ENCODE measurements at regions of chr14 and their contacts with region 1.

Region 1: GRCh38 chr14:64294672-64295413 is 672 bp upstream of the ESR2 start:
- DNase-seq: peak; percentile 91
- ATAC-seq: peak; percentile 87
- H3K4me3 Mint-ChIP-seq: peak overlapping the region; percentile 71
- H3K27ac Mint-ChIP-seq: peak overlapping the region; percentile 46
- H3K4me1 Mint-ChIP-seq: peaks cover 30% of the 10 kb centered on the region
- H3K27me3 Mint-ChIP-seq: peaks cover 21% of the 10 kb centered on the region
- CTCF ChIP-seq: peak; percentile 87

Region 2: DNA sequence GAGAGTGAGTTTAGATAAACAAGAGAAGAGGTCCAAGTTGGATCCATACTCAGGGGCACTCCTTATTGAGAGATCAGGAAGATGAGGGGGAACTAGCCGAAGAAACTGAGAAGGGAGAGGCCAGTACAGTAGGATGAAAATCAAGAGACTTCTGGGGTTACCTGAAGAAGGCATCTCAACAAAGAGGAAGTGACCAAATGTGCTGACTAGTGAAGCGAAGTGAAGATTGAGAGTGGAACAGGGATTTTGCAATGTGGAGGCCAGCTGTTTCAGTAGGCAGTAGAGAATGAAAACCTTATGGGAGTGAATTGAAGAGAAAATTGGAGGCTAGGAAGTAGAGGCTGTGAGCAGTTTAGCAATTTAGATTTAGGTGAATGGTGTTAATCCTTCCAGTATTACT is 289.0 kb before region 1 on chr14:
- CTCF ChIA-PET with region 1: interaction called, 10 read pairs
- POLR2A ChIA-PET with region 1: no interaction called
- intact Hi-C with region 1: no loop called
- DNase-seq: no peak
- ATAC-seq: no peak
- H3K4me3 Mint-ChIP-seq: no peak overlapping the region
- H3K27ac Mint-ChIP-seq: no peak overlapping the region
- H3K4me1 Mint-ChIP-seq: no peaks in the 10 kb centered on the region
- H3K27me3 Mint-ChIP-seq: no peaks in the 10 kb centered on the region
- CTCF ChIP-seq: no peak

Region 3: DNA sequence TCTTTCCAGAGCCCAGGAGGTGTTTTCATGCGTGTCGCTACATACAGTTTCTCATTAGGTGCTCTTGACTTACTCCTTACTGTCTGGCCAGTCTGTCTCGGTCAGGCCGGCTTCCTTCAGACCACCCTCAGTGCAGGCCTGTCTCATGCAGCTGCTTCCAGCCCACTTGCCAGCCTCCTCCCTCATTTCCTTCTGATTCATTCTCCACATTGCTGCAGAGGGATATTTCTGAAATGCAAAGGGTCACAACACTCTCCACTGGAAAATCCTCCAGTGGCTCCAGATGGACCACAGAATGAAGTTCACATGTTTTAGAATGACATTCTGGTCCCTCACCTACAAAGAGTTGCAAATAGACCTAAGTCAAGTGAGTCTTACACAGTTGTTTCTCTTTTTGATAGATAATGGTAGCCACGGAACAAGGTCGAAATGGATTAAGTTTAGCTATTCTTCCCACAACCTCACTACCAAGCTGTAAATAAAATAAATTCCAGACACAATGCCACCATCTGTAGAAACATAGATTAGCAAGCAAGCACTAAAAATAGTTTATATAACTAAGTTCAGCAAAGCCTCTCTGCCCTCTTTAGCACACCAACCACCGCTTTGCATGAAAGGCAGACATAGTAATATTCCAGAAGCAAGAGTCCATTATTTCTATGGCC is 147.6 kb before region 1 on chr14:
- CTCF ChIA-PET with region 1: interaction called, 4 read pairs
- POLR2A ChIA-PET with region 1: no interaction called
- intact Hi-C with region 1: loop called (anchors 10 kb)
- DNase-seq: no peak
- ATAC-seq: no peak
- H3K4me3 Mint-ChIP-seq: no peak overlapping the region
- H3K27ac Mint-ChIP-seq: no peak overlapping the region
- H3K4me1 Mint-ChIP-seq: no peaks in the 10 kb centered on the region
- H3K27me3 Mint-ChIP-seq: no peaks in the 10 kb centered on the region
- CTCF ChIP-seq: no peak

Region 4: GRCh38 chr14:64232095-64232838 is 62.6 kb before region 1 on chr14:
- CTCF ChIA-PET with region 1: interaction called, 7 read pairs
- POLR2A ChIA-PET with region 1: interaction called, 3 read pairs
- intact Hi-C with region 1: loop called (anchors 5 kb)
- DNase-seq: peak; percentile 71
- ATAC-seq: peak; percentile 91
- H3K4me3 Mint-ChIP-seq: no peak overlapping the region
- H3K27ac Mint-ChIP-seq: peak overlapping the region; percentile 62
- H3K4me1 Mint-ChIP-seq: peaks cover 18% of the 10 kb centered on the region
- H3K27me3 Mint-ChIP-seq: no peaks in the 10 kb centered on the region
- CTCF ChIP-seq: no peak

Region 5: DNA sequence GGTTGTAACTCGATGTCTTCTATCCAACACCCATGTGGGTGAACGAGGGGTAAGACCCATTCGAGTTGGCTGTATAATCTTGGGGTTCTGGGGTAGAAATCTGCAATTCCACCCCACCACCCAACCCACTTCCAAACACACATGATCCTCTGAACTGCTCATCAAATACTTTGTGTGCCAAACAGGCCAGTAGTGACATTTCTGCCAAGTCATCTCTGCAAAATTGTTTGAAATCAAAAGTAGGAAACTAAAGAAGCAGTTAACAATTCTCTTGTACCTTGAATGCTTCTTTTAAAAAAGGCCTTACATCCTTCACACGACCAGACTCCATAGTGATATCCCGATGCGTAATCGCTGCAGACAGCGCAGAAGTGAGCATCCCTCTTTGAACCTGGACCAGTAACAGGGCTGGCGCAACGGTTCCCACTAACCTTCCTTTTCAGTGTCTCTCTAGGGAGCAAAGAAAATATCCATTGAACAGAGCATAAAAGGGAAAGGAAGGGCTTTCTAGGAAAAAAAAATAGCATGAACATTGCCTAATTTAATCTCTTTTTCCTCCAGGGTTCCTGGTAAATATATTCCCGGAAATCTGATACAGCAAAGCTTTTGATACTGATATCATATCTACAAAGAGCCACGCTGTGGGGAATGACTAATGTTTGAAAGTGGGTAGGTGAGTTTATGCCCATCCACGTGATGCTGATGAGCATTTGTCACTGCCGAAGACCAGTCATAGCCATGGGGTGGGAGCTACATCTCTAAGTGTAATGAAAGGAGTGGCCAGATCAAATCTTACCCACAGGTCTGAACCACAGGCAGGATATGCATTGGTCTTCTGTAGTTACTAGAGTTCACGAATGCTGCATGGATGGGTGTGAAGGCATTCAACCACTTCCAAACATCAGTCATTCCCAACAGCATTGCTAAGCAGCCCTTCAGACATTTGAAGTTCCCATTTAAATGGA is 14.9 kb before region 1 on chr14:
- CTCF ChIA-PET with region 1: interaction called, 21 read pairs
- POLR2A ChIA-PET with region 1: no interaction called
- intact Hi-C with region 1: no loop called
- DNase-seq: peak; percentile 63
- ATAC-seq: peak; percentile 96
- H3K4me3 Mint-ChIP-seq: no peak overlapping the region
- H3K27ac Mint-ChIP-seq: no peak overlapping the region
- H3K4me1 Mint-ChIP-seq: peaks cover 21% of the 10 kb centered on the region
- H3K27me3 Mint-ChIP-seq: no peaks in the 10 kb centered on the region
- CTCF ChIP-seq: no peak

Measured in activated CD8-positive, alpha-beta T cell treated with anti-CD3 and anti-CD28 coated beads for 36 hours (primary cell).